Left cardiac atrium (tissue), 4 donors: ENCODE measurements at regions of chr17 and their contacts with region 1.

Region 1: DNA sequence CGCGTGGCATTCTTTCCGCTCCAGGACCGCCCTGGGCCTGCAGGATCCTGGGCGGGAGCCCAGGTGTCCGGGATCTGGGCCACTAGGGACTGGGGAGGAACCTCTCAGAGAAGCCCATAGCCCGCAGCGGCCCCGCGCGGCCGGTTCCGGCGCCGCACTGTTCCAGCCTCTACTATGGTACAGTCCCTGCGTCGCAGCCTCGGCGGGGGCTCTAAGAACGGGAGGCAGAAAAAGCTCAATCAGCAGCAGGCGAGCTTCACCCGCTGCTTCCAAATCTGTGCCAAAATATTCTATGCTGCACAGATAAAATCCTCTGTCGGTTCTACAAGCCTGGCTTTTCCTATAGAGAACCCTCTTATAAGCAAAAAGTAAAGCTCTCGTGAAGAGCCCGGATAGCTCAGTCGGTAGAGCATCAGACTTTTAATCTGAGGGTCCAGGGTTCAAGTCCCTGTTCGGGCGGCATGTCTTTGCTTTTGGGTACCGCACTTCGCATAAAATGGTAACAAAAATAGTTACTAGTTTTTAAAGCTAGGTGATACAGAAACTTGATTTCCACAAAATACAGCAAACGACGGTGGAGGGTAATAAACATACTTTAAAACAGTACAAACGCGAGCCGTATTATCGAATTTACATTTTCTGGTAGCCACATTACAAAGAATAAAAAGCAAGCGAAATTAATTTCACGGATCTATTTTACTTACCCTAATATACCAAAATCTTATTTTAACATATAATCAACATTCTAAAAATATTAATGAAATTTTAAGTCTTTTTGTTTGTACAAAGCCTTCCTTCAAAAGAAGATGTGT is 661 bp upstream of the ALOXE3 start:
- DNase-seq: peak; percentile 91
- ATAC-seq: peak; percentile 80 to 81

Region 2: DNA sequence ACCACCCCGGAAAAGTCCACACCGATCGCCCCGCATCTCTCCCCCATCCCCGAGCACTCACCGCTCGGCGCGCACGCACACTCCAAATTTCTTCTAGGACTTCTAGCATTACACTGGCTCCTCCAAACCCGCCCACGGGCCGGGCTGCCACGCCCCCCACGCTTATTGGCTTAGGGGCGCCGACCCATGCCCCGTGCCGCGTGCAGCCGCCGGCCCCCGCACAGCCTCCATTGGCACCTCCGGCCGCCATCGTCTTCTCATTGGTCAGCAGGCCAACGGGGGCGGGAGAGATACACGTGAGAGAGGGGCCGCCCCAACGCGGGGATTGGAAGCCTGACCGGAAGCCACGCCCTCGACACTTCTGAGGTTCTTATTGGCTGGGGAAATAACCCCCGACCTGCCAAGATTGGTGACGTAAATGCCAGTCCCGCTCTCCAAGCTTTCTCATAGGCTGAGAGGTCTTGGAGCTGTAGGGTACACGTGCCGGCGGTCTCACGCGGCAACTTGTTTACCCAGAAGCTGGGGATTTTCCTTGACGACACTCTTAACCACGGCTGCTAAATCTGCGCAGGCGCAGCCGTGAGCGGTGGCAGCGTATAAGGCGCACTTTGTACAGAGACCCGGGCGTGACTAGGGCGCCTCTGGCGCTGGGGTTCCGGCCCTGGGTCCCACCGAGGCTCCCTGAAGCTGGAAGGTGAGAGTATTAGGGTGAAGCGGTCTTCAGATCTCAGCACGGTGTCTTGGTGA is 37.4 kb after region 1 on chr17:
- intact Hi-C with region 1: loop called in 1 of 2 experiments (anchors 5 kb)
- DNase-seq: peak; percentile 100
- ATAC-seq: peak; percentile 65 to 67

Region 3: DNA sequence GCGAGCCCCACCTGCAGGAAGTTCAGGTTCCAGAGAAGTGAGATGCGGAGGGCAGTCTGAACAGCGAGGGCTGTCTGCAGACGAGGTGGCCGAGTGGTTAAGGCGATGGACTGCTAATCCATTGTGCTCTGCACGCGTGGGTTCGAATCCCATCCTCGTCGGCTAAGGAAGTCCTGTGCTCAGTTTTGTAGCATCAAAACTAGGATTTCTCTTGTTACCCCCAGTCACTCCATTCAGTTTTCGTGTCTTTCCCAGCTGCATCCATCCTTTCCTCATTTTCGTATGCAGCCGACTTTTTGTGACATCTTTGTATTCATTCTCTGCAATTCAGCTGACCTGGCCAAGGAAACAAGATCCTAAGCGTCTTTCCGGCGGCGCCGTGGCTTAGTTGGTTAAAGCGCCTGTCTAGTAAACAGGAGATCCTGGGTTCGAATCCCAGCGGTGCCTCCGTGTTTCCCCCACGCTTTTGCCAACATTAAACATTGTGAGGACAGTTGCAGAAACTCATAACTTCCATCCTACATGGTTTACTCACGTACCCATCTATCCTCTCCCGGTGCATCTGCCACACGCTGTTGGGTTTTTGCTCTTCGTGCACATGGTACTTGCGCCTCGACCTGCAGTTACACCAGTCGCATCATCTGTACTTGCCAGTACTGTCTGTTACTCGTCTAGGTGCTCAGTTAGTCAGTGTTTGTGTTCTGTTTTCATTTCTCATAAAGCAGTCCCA is 68.0 kb after region 1 on chr17:
- intact Hi-C with region 1: loop called in 1 of 2 experiments (anchors 1 kb)
- DNase-seq: peak; percentile 91
- ATAC-seq: peak; percentile 69 to 72

Region 4: GRCh38 chr17:8204761-8205555 is 86.0 kb after region 1 on chr17:
- intact Hi-C with region 1: no loop called
- DNase-seq: no peak
- ATAC-seq: no peak

Region 5: DNA sequence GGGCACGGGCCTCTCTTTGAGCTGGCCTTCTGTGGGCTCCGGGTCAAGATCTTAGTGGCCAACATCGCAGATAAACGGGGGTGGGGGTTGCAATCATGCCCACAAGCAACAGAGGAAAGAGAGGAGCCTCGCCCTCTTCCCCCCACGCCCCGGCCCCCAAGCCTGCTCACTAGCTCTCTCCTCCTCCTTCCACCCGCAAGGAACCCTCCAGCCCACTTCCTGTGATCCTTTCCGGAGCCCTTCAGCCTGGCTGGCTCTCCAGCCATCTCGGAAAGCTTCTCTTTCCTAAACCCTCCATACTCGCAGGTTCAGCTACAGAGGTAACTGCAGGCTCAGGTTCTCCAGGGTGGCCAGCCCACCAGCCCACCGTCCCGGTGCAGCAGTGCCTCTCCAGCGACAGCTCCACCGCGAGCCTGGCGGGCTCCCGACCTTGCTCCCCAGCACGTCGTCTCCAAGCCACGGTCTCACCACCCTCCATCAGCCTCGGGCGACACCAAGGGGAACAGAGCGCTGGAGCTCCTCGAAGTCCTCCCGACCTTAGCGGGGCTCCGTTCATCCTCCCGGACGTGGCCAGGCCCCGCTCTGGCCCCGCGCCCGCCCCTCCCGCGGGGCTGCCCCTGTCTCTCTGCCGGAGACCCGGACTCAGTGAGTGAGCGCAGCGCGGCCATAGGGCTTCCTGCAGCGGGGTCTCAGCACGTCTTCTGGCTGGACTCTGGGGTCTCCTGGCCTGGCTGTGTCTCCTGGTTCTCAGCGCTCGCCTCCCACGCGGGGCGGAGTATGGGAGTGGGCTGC is 207.7 kb after region 1 on chr17:
- intact Hi-C with region 1: no loop called
- DNase-seq: peak; percentile 62
- ATAC-seq: peak; percentile 80 to 83

Region 6: DNA sequence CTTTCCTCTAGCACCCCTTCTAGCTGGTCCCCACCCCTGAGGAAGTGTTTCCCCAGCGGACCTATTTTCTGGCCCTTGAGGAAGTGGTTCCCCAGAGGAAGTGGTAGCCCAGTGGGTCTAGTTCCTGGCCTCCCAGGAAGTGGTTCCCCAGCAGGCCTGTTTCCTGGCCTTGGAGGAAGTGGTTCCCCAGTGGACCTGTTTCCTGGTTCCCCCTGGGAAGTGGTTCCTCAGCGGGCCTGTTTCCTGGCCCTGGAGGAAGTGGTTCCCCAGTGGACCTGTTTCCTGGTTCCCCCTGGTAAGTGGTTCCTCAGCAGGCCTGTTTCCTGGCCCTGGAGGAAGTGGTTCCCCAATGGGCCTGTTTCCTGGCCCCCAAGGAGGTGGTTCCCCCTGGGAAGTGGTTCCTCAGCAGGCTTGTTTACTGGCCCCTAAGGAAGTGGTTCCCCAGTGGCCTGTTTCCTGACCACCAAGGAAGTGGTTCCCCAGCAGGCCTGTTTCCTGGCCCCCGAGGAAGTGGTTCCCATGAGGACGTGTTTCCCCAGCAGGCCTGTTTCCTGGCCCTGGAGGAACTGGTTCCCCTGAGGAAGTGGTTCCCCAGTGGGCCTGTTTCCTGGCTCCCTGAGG is 960.6 kb after region 1 on chr17:
- intact Hi-C with region 1: no loop called
- DNase-seq: no peak
- ATAC-seq: no peak